Transverse colon (tissue), 4 donors: ENCODE measurements at regions of chr22 and their contacts with region 1.

Region 1: DNA sequence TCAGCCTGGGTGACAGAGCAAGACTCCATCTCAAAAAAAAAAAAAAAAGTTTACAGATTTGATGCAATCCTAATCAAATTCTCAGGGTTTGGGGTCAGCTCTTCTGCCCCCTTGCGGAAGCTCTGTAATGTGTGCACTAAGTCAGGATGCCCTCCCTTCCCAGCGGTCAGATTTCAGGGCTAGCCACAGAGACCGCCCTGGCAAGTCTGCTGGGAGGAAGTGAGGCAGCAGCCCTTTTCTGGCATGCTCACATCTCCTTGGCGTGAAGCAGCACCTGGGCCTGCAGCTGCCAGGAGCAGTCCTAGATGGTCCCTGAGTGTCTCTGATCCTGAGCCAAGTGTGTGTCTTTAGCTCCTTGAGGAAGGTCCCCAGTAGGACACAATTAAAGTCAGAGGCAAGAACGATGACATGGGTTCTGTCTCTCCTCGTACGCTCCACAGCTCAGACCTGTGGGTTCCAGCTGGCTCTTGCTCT is 10.9 kb upstream of the APOBEC3C start:
- DNase-seq: peak; percentile 83
- H3K4me3 ChIP-seq: no peak overlapping the region
- H3K27ac ChIP-seq: peak overlapping the region in 1 of 4 donors; percentile 24
- H3K4me1 ChIP-seq: peaks cover 0 to 6% (median 1%) of the 10 kb centered on the region in 4 donors
- H3K27me3 ChIP-seq: no peaks in the 10 kb centered on the region
- CTCF ChIP-seq: peak; percentile 66 to 86 (median 73)
- EP300 ChIP-seq: no peak
- POLR2A ChIP-seq: no peak

Region 2: GRCh38 chr22:39117585-39118191 is 114.5 kb after region 1 on chr22:
- in situ Hi-C with region 1: loop called (anchors 5 to 25 kb)
- intact Hi-C with region 1: loop called (anchors 10 kb)
- DNase-seq: peak; percentile 81
- H3K4me3 ChIP-seq: no peak overlapping the region
- H3K27ac ChIP-seq: no peak overlapping the region
- H3K4me1 ChIP-seq: peaks cover 0 to 3% (median 0%) of the 10 kb centered on the region in 4 donors
- H3K27me3 ChIP-seq: peaks cover 23% of the 10 kb centered on the region
- CTCF ChIP-seq: peak; percentile 36 to 55 (median 40)
- EP300 ChIP-seq: no peak
- POLR2A ChIP-seq: no peak

Region 3: DNA sequence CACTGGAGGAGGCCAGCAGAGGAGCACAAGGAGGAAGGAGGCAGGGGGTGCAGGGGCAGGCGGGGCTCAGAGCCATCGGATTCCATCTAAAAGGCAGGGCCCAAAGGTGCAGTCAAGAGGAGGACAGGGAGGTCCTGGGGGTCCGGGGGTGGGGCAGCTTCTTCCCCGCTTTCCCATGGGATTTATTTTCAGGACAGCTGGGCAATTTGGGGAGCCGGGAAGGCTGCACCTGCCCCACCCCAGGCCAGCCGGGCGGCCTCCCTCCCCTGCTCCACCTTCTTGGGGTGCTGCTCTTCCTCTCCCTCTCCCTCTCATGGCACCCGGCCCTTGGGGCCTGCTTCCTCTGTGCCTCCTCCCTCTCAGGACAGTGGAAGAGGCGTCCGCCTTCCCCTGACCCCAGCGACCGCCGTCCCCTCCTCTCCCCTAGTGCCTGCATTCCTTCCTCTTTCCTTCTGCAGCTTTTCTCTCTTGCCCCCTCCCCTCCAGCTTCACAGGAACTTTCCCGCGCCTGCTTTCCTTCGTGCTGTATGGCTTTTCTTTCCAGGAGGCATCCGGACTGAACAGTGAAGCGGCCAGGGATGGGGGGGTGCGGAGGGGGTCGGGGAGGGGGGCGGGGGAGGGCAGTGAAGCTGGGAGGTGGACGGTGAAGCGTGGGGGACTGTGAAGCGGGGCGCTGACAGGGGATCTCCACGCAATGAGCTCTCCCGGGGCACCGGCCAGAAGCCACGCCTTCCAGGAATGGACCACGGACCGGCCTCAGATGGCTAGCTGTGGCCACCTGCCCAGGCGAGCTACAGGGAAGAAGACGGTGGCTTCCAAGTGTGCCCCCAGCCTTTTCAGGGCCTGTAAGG is 120.8 kb after region 1 on chr22:
- in situ Hi-C with region 1: loop called (anchors 5 to 25 kb)
- intact Hi-C with region 1: loop called (anchors 10 kb)
- DNase-seq: no peak
- H3K4me3 ChIP-seq: no peak overlapping the region
- H3K27ac ChIP-seq: no peak overlapping the region
- H3K4me1 ChIP-seq: peaks cover 0 to 5% (median 2%) of the 10 kb centered on the region in 4 donors
- H3K27me3 ChIP-seq: no peaks in the 10 kb centered on the region
- CTCF ChIP-seq: no peak
- EP300 ChIP-seq: no peak
- POLR2A ChIP-seq: no peak

Region 4: GRCh38 chr22:39166547-39166946 is 163.3 kb after region 1 on chr22:
- in situ Hi-C with region 1: no loop called
- intact Hi-C with region 1: no loop called
- DNase-seq: no peak
- H3K4me3 ChIP-seq: no peak overlapping the region
- H3K27ac ChIP-seq: no peak overlapping the region
- H3K4me1 ChIP-seq: peaks cover 0 to 6% (median 2%) of the 10 kb centered on the region in 4 donors
- H3K27me3 ChIP-seq: no peaks in the 10 kb centered on the region
- CTCF ChIP-seq: no peak
- EP300 ChIP-seq: no peak
- POLR2A ChIP-seq: no peak

Region 5: DNA sequence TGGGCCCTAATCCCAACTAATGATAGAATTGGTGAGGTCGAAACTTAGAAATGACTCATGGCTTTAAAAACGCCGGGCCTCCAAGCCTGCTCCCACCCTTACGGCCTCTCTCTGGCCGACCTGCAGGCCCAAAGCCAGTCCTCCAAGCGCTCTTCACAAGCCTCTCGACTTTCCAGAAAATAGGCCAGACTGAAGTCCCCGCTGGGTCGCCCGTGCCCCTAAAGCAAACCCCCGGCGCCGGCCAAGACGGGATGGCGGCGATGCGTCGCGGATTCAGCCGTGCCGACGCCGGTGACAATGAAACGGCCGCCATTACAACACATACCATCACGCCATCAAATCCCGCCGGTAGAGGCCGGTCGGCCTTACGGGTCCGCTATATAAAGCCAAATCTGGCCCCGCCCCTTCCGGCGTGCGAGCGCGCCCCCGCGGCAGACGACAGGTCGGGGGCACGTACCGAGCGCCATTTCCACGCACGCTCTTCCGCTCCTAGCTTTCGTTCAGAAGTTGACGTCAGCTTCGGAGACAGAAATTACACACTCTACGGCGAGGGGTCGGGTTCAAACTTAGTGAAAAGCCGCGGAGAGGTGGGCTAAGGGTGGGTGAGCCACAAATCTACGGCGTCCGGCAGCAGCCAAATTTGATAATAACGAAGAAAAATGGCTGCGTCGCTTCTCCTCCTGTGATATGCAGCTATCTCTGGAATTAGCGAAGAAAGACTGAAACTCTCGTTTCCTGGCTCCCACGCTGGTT is 316.2 kb after region 1 on chr22 and contains the start of gene RPL3:
- in situ Hi-C with region 1: loop called in 2 of 4 experiments (anchors 25 kb)
- intact Hi-C with region 1: no loop called
- DNase-seq: peak; percentile 96
- H3K4me3 ChIP-seq: peak within 1 kb of the TSS; percentile 60 to 82 (median 74)
- H3K27ac ChIP-seq: peak within 1 kb of the TSS; percentile 96 to 99 (median 98)
- H3K4me1 ChIP-seq: peaks cover 33 to 42% (median 37%) of the 10 kb centered on the region in 4 donors
- H3K27me3 ChIP-seq: no peaks in the 10 kb centered on the region
- CTCF ChIP-seq: peak in 4 of 5 experiments; percentile 6 to 52 (median 16)
- EP300 ChIP-seq: peak; percentile 18
- POLR2A ChIP-seq: peak; percentile 98
- total RNA-seq, gene RPL3: 909 to 2,069 (median 1,420) TPM